ENCODE measurements at regions of chr1 and their contacts with region 1.

Region 1: DNA sequence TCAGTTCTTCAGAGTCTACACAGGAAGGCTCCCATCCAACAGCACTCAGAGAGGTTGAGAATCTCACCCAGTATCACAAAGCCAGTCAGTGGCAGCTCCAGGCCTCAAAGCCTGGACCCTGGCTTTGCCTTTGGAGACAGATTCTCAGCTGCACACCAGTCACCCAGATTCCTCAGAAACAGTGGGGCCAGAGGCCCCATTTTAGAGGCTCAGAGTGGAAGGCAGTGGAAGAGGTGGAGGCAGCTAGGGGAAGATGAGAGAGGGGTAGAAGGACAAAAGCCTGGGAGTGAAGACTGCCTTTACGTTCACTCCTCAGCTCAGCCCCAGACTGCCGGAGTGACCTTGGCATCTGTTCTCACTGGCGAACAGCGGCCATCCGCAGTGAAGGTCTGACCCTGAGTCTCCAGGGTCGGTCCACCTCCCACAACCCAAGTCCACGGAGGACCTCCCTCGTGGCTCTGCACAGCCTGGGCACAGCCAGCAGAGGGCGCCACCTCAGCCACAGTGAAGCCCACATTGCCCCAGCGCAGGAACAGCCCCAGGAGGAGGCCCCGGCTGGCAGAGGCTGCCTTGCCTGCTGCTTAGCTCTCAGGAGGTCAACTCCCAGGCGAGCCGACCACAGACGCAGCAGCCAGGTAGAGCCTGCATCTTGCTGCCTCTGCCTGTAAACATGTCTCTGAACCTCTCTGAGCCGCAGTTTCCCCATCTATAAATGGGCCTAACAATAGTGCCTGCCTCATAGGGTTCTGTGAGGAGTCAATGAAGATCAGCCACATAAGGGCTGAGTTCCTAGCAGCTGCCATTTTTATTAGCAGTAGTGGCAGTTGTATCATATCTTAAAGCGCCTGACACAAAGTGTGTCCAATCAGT is 5.9 kb upstream of the FNDC5 start:
- DNase-seq: peak; percentile 24
- ATAC-seq: peak; percentile 75
- H3K4me3 ChIP-seq: peak overlapping the region in 1 of 3 experiments; percentile 3; a peak in 1 of 6 replicates
- H3K27ac ChIP-seq: no peak overlapping the region
- H3K4me1 ChIP-seq: peaks cover 18% of the 10 kb centered on the region
- H3K27me3 ChIP-seq: peaks cover 1 to 25% of the 10 kb centered on the region in 2 experiments; a peak in 3 of 5 replicates
- CTCF ChIP-seq: peak; percentile 92
- EP300 ChIP-seq: no peak
- POLR2A ChIP-seq: no peak
- RAD21 ChIP-seq: peak; percentile 59; the same call in 1 of the 2 replicates

Region 2: GRCh38 chr1:32828341-32828740 is 48.2 kb before region 1 on chr1:
- CTCF ChIA-PET with region 1: no interaction called
- POLR2A ChIA-PET with region 1: no interaction called
- in situ Hi-C with region 1: loop called (anchors 10 kb)
- intact Hi-C with region 1: no loop called
- DNase-seq: peak; percentile 39
- ATAC-seq: no peak
- H3K4me3 ChIP-seq: no peak overlapping the region
- H3K27ac ChIP-seq: no peak overlapping the region
- H3K4me1 ChIP-seq: no peaks in the 10 kb centered on the region
- H3K27me3 ChIP-seq: no peaks in the 10 kb centered on the region
- CTCF ChIP-seq: no peak
- EP300 ChIP-seq: no peak
- POLR2A ChIP-seq: no peak
- RAD21 ChIP-seq: no peak

Region 3: DNA sequence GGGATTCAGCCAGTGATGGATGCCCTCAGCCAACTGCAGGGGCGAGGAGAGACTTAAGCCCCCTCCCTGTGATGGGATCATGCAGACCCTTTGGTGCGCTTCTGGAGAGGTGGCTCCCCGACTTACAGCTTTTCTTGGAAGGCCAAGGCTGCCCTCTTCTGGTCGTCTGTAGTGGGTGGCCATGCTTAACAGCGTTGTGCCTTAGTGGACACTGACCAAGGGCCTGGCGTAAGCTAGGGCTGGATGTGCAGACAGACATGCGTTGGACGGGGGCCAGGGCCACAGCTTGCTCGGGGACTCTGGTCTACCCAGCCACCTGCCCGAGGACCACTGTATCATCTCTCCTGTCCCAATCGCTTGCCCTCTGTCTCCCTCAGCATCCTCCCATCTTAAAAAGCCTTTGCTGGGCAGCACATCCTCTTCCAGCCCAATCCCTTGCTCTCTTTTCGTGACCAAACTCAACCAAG is 209.8 kb after region 1 on chr1:
- CTCF ChIA-PET with region 1: interaction called, 9 read pairs
- POLR2A ChIA-PET with region 1: no interaction called
- in situ Hi-C with region 1: no loop called
- intact Hi-C with region 1: loop called (anchors 1 kb)
- DNase-seq: peak; percentile 69
- ATAC-seq: peak; percentile 91
- H3K4me3 ChIP-seq: no peak overlapping the region
- H3K27ac ChIP-seq: no peak overlapping the region
- H3K4me1 ChIP-seq: peaks cover 8% of the 10 kb centered on the region; the same call in 1 of the 2 replicates
- H3K27me3 ChIP-seq: no peaks in the 10 kb centered on the region
- CTCF ChIP-seq: peak; percentile 95
- EP300 ChIP-seq: no peak
- POLR2A ChIP-seq: no peak
- RAD21 ChIP-seq: peak; percentile 78